Natural killer cell (primary cell): ENCODE measurements at regions of chr3 and their contacts with region 1.

Region 1: GRCh38 chr3:63911873-63912767 is at the start of gene SCAANT1:
- DNase-seq: peak; percentile 81 to 92
- ATAC-seq: peak; percentile 69 to 86 (median 76)
- H3K4me3 ChIP-seq: peak within 1 kb of the TSS; percentile 67
- H3K4me3 Mint-ChIP-seq: peak within 1 kb of the TSS; percentile 92
- H3K27ac ChIP-seq: peak within 1 kb of the TSS; percentile 77
- H3K27ac Mint-ChIP-seq: peak within 1 kb of the TSS; percentile 90 to 96
- H3K4me1 ChIP-seq: peaks cover 15% of the 10 kb centered on the region
- H3K4me1 Mint-ChIP-seq: peaks cover 38 to 49% of the 10 kb centered on the region in 2 donors
- H3K27me3 ChIP-seq: no peaks in the 10 kb centered on the region
- H3K27me3 Mint-ChIP-seq: no peaks in the 10 kb centered on the region
- CTCF ChIP-seq: no peak
- total RNA-seq, gene SCAANT1: 3.6 to 8.0 TPM in 2 of 3 donors, not detected in the other

Region 2: DNA sequence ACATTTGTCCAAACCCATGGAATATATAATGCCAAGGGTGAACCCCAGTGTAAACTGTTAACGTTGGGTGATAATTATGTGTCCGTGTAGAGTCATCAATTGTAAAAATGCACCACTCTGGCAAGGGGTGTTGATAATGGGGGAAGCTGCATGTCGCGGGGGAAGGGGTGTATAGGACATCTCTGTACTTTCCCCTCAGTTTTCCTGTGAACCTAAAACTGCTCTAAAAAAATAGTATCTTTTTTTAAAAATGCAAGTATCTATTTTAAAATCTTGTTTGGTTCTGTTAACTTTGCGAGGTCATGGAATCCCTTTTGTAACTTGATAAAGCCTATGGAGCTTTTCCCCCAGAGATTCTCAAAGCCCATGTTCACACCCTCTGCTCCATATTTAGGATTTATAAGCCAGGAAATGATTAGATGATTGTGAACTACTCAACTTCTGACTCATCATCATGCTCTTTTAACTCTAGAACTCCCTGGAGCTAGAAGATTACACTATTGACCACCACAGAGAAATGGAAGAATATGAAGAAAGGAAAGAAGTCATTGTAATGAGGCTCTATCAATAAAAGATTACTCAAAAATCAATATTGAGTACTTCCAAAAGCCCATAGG is 149.1 kb before region 1 on chr3:
- intact Hi-C with region 1: no loop called
- DNase-seq: no peak
- ATAC-seq: no peak
- H3K4me3 ChIP-seq: no peak overlapping the region
- H3K4me3 Mint-ChIP-seq: no peak overlapping the region
- H3K27ac ChIP-seq: no peak overlapping the region
- H3K27ac Mint-ChIP-seq: no peak overlapping the region
- H3K4me1 ChIP-seq: no peaks in the 10 kb centered on the region
- H3K4me1 Mint-ChIP-seq: no peaks in the 10 kb centered on the region
- H3K27me3 ChIP-seq: no peaks in the 10 kb centered on the region
- H3K27me3 Mint-ChIP-seq: no peaks in the 10 kb centered on the region
- CTCF ChIP-seq: no peak

Region 3: DNA sequence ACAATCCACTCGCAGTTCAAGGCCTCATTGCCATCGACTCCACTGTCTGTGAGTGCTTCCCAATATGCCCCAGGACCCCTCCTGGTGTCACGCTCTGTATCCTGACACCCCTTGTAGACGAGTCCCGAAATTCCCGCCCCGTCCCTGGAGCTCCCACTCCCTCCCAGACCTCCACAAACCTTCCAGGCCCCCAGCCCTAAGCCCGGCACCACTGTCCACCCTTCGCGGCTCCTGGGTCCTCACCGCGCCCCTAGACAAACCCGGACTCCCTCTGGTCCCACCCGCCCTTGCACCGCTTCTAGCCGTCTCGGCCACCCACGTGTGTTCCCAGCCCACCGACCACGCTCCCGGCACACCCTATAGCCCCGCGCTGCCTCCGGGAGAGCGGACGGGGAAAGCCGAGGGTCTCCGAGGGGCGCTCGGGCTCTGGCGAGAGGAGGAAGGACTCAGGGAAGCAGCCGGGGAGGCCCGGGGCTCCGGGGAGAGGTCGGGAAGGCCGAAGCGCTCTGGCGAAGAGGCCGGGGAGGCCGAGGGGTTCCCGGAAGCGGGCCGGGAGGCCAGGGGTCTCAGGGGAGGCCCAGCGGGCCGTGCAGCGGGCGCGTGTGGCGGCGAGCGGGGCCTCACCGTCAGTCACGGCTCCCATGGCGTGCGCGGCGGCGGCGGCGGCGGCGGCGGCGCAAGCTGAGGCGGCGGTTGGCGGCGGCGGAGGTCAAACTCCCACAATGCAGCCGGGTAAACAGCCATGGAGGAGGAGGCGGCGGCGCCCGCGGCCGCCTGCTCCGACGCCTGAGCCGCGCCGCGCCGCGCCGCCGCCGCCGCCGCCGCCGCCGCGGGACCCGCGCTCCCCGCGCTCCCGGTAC is 48.7 kb before region 1 on chr3 and contains the starts of genes ATXN7 and THOC7:
- intact Hi-C with region 1: loop called (anchors 1 kb)
- DNase-seq: peak; percentile 71 to 83
- ATAC-seq: peak; percentile 80 to 89 (median 88)
- H3K4me3 ChIP-seq: peak within 1 kb of the TSS; percentile 61
- H3K4me3 Mint-ChIP-seq: peak within 1 kb of the TSS; percentile 93
- H3K27ac ChIP-seq: peak within 1 kb of the TSS; percentile 65
- H3K27ac Mint-ChIP-seq: peak within 1 kb of the TSS; percentile 89 to 90
- H3K4me1 ChIP-seq: peaks cover 17% of the 10 kb centered on the region
- H3K4me1 Mint-ChIP-seq: peaks cover 45 to 46% of the 10 kb centered on the region in 2 donors
- H3K27me3 ChIP-seq: no peaks in the 10 kb centered on the region
- H3K27me3 Mint-ChIP-seq: no peaks in the 10 kb centered on the region
- CTCF ChIP-seq: no peak
- total RNA-seq, gene ATXN7: 126 to 176 (median 146) TPM
- total RNA-seq, gene THOC7: 30.3 to 35.8 (median 32.5) TPM

Region 4: DNA sequence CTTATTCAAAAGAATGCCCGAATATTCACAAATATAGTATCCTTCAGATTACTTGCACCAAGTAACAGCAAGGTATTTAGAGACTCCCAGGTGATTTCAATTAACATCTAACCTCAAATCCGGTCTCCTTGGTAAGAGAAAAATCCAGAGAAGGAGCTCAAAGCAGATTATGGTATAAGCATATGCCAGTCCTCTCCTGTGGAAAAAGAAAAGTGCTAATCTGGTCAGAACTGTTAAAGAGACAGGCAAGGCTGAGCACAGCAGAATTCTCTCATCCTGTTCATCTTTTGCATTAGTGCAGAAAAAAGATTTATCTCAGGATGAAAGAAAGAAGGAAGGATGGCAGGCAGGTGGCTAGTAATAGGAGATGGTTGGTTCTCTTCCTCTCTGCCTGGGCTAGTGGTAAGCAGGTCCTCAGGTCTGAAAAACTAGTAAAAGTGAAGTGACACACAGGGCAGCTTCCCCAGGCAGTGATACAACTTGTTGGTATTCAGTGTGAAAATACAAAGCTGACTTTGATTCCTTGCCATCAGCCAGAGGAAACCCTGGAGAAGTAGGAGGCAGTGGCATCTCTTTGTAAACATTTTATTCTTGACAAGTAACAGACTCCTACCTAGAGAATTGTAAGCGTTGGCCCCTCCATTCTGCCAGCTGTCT is 34.3 kb before region 1 on chr3:
- intact Hi-C with region 1: no loop called
- DNase-seq: no peak
- ATAC-seq: no peak
- H3K4me3 ChIP-seq: no peak overlapping the region
- H3K4me3 Mint-ChIP-seq: no peak overlapping the region
- H3K27ac ChIP-seq: no peak overlapping the region
- H3K27ac Mint-ChIP-seq: peak overlapping the region; percentile 29 to 77
- H3K4me1 ChIP-seq: peaks cover 10% of the 10 kb centered on the region
- H3K4me1 Mint-ChIP-seq: peaks cover 57 to 62% of the 10 kb centered on the region in 2 donors
- H3K27me3 ChIP-seq: no peaks in the 10 kb centered on the region
- H3K27me3 Mint-ChIP-seq: no peaks in the 10 kb centered on the region
- CTCF ChIP-seq: no peak

Region 5: DNA sequence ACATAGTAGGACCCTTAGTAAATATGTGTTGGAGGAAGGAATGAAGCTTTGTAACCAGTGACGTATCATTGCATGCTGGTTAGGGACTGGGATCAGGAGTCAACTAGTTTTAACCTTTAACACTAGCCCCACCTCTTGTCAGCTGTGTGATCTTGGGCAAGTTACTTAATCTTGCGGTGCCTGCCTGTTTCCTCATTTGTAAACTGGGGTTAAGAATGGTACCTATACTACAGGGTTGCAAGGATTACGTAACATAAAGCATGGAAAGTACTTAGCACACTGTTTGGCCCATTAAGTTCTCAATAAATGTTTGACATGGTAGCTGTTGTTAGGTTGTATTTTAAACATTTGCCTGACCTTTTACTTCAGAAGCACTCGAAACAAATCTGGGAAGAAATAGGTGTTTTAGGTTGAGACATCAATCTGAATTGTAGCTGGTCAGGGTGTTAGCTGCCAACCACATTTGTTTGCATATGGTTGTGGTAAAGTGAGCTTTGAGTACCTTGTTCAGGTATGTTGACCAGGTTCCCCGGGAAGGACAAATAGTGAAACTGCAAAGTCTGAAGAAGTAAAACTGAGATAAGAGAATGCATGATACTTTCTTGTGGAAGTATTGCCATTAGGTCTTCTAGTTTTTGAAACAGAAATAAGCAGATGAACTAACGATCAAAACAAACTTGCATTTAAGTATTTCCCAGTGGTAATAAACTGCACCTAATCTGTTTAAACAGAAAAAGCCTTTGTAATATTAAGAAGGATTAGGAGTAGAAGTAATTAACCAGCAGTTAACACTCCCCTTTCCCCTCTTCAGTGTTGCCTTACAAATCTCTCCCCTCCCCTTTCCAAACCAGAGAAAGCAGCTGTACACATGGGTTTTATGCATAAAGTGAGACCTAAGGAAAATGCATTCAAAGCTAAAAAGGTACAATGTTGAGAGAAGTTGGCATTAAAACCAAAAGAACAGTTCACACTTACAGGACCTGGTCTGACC is 25.8 kb after region 1 on chr3:
- intact Hi-C with region 1: loop called (anchors 2 kb)
- DNase-seq: peak; percentile 28 to 42
- ATAC-seq: peak; percentile 61 to 69 (median 66)
- H3K4me3 ChIP-seq: no peak overlapping the region
- H3K4me3 Mint-ChIP-seq: peak overlapping the region; percentile 67
- H3K27ac ChIP-seq: peak overlapping the region; percentile 41
- H3K27ac Mint-ChIP-seq: peak overlapping the region; percentile 84 to 88
- H3K4me1 ChIP-seq: peaks cover 26% of the 10 kb centered on the region
- H3K4me1 Mint-ChIP-seq: peaks cover 86 to 89% of the 10 kb centered on the region in 2 donors
- H3K27me3 ChIP-seq: no peaks in the 10 kb centered on the region
- H3K27me3 Mint-ChIP-seq: no peaks in the 10 kb centered on the region
- CTCF ChIP-seq: no peak

Region 6: DNA sequence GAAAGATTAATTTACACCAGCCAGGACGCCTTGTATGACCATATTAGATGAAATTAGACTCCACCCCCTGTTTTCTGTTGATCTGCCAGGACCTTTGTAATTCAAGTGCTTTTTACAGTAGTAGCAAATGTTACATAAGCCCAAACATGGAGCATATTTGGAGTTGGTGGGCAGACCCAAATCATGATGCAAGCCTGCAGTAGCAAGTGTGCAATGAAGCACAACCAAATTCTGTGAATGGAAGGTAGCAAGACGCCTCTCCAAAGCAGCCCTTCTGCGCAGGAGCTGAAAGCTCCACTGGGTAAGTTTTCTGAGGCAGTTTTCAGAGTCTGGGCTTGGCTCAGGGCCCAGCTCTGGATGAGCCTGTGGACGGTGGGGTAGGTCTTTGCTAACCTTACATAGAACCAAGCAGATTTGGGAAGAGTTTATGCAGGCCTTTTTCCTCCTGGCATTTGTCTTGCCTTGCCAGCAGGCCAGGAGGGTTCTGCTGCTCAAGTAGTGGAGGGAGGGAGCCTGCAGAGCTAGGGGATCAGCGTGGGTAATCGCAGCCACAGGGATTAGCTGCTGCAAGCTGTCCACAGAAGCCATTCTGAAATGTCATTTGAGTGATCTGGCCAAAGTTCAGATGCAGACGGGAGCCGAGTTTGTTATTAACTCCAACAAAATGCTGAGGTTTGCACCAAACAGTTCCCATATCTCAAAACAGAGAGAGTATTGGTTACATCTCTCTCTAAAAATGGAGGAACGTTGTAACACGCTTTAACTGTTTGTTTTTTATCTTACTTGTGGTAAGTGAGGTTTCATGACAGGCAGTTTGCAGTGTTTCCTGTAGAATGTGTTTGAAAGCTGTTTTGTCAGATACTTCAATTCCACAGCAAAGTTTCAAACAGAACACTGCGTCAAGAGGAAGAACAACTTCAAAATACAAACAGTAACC is 55.8 kb after region 1 on chr3:
- intact Hi-C with region 1: loop called (anchors 5 kb)
- DNase-seq: peak; percentile 39 to 87
- ATAC-seq: peak; percentile 68 to 82 (median 72)
- H3K4me3 ChIP-seq: peak overlapping the region; percentile 52
- H3K4me3 Mint-ChIP-seq: peak overlapping the region; percentile 99
- H3K27ac ChIP-seq: peak overlapping the region; percentile 79
- H3K27ac Mint-ChIP-seq: peak overlapping the region; percentile 95 to 99
- H3K4me1 ChIP-seq: peaks cover 26% of the 10 kb centered on the region
- H3K4me1 Mint-ChIP-seq: peaks cover 72% of the 10 kb centered on the region in 2 donors
- H3K27me3 ChIP-seq: no peaks in the 10 kb centered on the region
- H3K27me3 Mint-ChIP-seq: no peaks in the 10 kb centered on the region
- CTCF ChIP-seq: no peak

Region 7: DNA sequence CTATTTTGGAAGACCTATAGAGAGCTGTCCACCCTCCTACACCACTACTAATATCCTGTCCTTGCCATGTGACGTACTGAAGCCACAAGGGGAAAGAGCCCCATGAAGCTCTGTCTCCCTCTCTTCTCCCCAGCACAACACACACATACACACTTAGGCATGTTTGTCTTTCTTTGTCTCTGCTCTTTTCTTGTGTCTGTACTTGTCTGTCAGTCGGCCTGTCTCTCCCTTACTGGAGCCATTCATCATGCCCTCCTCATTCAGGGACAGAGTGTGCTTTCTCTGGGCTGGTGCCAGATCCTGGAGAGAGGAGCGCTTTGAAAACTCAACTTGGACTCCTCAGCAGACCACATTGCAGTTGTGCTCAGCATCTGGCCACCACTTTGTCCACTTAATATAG is 63.6 kb after region 1 on chr3:
- intact Hi-C with region 1: loop called (anchors 2 kb)
- DNase-seq: no peak
- ATAC-seq: no peak
- H3K4me3 ChIP-seq: no peak overlapping the region
- H3K4me3 Mint-ChIP-seq: no peak overlapping the region
- H3K27ac ChIP-seq: no peak overlapping the region
- H3K27ac Mint-ChIP-seq: peak overlapping the region; percentile 83 to 92
- H3K4me1 ChIP-seq: peaks cover 41% of the 10 kb centered on the region
- H3K4me1 Mint-ChIP-seq: peaks cover 86 to 93% of the 10 kb centered on the region in 2 donors
- H3K27me3 ChIP-seq: no peaks in the 10 kb centered on the region
- H3K27me3 Mint-ChIP-seq: no peaks in the 10 kb centered on the region
- CTCF ChIP-seq: no peak

Region 8: GRCh38 chr3:63993653-63994079 is 81.5 kb after region 1 on chr3:
- intact Hi-C with region 1: loop called (anchors 1 kb)
- DNase-seq: peak; percentile 44 to 81
- ATAC-seq: peak; percentile 80 to 98 (median 89)
- H3K4me3 ChIP-seq: no peak overlapping the region
- H3K4me3 Mint-ChIP-seq: no peak overlapping the region
- H3K27ac ChIP-seq: no peak overlapping the region
- H3K27ac Mint-ChIP-seq: peak overlapping the region; percentile 46 to 60
- H3K4me1 ChIP-seq: no peaks in the 10 kb centered on the region
- H3K4me1 Mint-ChIP-seq: peaks cover 4 to 15% of the 10 kb centered on the region in 2 donors
- H3K27me3 ChIP-seq: no peaks in the 10 kb centered on the region
- H3K27me3 Mint-ChIP-seq: no peaks in the 10 kb centered on the region
- CTCF ChIP-seq: peak; percentile 94

Region 9: DNA sequence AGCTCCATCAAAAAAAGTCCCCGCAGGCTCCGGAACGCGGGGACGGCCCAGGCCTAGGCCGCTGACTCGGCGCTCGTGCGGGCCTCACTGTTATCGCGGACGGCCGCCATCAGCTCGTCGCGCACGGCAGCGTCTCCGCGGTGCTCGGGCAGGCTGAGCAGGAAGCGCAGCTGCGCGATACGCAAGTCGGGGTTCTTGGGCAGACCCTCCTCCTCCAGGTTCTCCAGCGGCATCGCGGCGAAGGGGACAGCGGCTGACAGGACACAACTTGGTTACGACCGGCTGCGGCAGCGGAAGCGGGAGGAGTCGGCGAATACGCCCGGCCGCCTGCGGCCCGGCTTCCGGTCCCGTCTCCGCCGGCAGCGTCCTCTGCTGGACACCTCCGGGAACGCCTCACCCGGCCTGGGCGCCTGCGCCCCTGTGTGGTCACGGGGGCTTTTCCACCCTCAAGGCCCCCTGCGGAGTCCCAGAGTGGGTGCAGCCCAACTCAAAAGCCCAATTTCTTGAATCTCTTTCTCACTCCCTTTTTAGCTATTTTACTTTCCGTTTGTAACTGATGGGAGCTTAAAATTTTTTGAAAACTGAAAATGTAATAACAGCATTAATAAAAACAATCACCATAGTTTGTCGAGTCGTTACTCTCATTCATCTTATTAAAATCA is 111.2 kb after region 1 on chr3 and contains the start of gene PSMD6:
- intact Hi-C with region 1: loop called (anchors 5 kb)
- DNase-seq: peak; percentile 91 to 95
- ATAC-seq: peak; percentile 95 to 99 (median 97)
- H3K4me3 ChIP-seq: peak within 1 kb of the TSS; percentile 88
- H3K4me3 Mint-ChIP-seq: peak within 1 kb of the TSS; percentile 85
- H3K27ac ChIP-seq: peak within 1 kb of the TSS; percentile 80
- H3K27ac Mint-ChIP-seq: peak within 1 kb of the TSS; percentile 84 to 89
- H3K4me1 ChIP-seq: peaks cover 14% of the 10 kb centered on the region
- H3K4me1 Mint-ChIP-seq: peaks cover 22 to 24% of the 10 kb centered on the region in 2 donors
- H3K27me3 ChIP-seq: no peaks in the 10 kb centered on the region
- H3K27me3 Mint-ChIP-seq: peaks cover 12 to 21% of the 10 kb centered on the region in 2 donors
- CTCF ChIP-seq: peak; percentile 99
- total RNA-seq, gene PSMD6: 84.4 to 105 (median 102) TPM

Region 10: DNA sequence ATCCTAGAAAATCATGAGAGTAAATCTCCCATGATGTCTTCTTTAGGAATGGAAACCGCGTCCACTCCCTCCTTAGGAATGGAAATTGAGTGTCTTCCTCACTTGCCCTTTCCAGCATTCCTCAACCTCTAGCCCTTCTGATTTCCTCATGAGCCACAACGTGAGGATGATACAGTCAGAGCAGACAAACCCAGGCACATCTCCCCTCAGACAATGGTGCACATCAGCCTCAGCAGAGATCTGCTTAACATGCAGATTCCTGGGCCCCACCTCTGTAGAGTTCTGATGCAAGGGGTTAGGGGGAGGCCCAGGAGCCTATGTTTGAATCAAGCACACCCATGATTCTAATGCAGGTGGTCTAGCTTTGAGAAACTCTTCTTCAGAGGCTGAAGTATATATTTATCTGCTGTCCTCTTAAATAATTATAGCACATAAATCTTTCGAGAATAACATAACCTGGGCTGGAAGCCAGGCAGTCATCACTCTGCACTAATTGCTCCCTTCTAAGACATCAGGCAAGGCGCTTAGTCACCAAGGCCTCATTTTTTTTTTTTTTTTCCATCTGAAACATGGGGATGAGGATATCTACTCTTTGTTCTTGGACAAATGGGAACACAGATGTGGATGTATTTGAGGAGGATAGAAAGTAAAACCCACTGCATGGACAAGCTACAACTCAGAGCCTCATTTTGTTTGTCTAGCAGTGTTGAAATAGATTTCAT is 231.4 kb after region 1 on chr3:
- intact Hi-C with region 1: no loop called
- DNase-seq: no peak
- ATAC-seq: no peak
- H3K4me3 ChIP-seq: no peak overlapping the region
- H3K4me3 Mint-ChIP-seq: no peak overlapping the region
- H3K27ac ChIP-seq: no peak overlapping the region
- H3K27ac Mint-ChIP-seq: no peak overlapping the region
- H3K4me1 ChIP-seq: no peaks in the 10 kb centered on the region
- H3K4me1 Mint-ChIP-seq: no peaks in the 10 kb centered on the region
- H3K27me3 ChIP-seq: no peaks in the 10 kb centered on the region
- H3K27me3 Mint-ChIP-seq: no peaks in the 10 kb centered on the region
- CTCF ChIP-seq: no peak